ENCODE measurements at regions of chr3 and their contacts with region 1.

Region 1: DNA sequence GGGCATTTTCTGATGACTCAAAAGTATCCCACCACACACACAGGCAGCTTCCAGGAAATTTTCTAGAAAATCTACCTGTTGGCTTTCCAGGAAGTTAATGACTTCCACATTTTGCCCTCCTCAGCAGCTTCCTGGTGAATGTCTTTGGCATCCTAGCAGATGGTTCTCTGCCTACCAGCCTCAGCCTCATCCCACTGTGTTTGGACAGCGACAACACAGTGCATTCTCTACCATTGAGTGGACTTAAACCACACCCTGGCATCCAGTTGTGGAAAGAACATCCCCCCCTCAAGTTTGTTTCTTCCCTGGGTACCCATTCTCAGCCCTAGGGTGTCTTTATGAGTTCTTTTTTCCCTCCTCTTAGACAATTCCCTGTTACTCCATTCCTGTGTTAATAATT is 50.8 kb upstream of the GADL1 start:
- DNase-seq: no peak
- H3K4me3 ChIP-seq: no peak overlapping the region
- CTCF ChIP-seq: no peak

Region 2: GRCh38 chr3:30760040-30760695 is 185.1 kb before region 1 on chr3:
- CTCF ChIA-PET with region 1: no interaction called
- POLR2A ChIA-PET with region 1: no interaction called
- DNase-seq: no peak
- H3K4me3 ChIP-seq: no peak overlapping the region
- CTCF ChIP-seq: no peak

Region 3: GRCh38 chr3:30934208-30934550 is 11.1 kb before region 1 on chr3:
- CTCF ChIA-PET with region 1: interaction called, 14 read pairs
- POLR2A ChIA-PET with region 1: no interaction called
- DNase-seq: no peak
- H3K4me3 ChIP-seq: no peak overlapping the region
- CTCF ChIP-seq: peak; percentile 49